BJ (cell line): ENCODE measurements at regions of chr2 and their contacts with region 1.

Region 1: DNA sequence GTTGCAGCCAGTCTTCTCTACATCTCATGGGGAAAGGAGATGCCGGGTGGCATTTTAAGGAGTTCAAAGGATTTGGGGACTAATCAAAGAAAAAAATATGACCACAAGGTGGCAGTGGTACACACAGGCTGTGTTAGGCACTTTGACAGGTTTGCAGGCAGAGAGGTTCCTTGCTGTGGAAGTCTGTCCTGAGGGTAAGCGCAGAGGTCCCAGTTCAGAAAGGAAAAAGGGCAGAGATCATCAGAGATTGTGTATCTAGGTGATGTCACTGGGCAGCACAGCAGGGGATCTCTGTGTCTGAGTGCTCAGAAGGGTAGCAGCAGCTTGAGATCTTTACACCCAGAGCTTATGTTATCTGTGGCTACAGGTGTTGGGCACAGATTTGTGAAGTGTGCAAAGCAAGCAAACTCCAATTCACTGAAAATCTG is 231.4 kb downstream of the LRRTM1 start:
- DNase-seq: no peak
- H3K4me3 ChIP-seq: no peak overlapping the region
- H3K27me3 ChIP-seq: no peaks in the 10 kb centered on the region
- CTCF ChIP-seq: peak; percentile 76

Region 2: DNA sequence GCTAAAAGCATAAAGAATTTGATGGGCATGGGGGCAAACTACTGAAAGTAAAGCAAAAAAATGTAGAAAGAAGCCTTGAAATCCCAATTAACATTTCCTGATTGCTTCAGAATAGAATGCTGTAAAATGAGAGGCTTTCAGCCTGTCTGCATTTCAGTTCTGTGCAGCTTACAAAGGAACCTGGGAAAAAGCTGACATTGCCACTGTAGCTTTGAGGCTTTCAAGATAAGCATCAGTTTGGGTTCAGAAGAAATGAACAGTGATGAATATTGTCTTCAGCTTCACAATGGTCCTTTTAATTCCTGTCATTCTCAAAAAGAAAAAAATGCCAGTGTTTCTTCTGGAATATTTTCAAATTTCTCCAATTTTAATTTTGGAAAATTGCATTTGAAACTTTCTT is 11.3 kb before region 1 on chr2:
- CTCF ChIA-PET with region 1: interaction called, 10 read pairs
- POLR2A ChIA-PET with region 1: no interaction called
- DNase-seq: no peak
- H3K4me3 ChIP-seq: no peak overlapping the region
- H3K27me3 ChIP-seq: no peaks in the 10 kb centered on the region
- CTCF ChIP-seq: no peak

Region 3: DNA sequence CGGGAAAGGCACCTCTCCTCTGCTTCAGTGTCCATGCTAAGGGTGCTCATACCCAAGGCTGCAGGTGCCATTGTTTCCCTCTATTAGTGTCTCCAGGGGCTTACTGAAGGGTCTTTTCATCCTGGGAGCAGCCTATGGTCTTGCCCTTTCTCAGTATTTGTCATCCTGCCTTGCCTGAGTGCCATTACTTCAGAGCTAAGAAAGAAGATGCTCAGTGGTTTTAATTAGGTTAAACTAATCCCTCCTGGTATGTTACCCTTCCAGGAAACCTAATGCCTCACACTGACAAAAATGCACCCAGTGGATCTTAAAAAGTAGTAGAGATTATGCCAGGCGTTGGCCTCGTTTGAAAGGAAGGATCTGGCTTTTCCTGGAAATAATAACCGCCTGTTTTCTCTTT is 80.0 kb after region 1 on chr2:
- CTCF ChIA-PET with region 1: no interaction called
- POLR2A ChIA-PET with region 1: no interaction called
- DNase-seq: no peak
- H3K4me3 ChIP-seq: no peak overlapping the region
- H3K27me3 ChIP-seq: no peaks in the 10 kb centered on the region; the same call in 1 of the 2 replicates
- CTCF ChIP-seq: no peak